GM12878 (cell line): ENCODE measurements at regions of chr4 and their contacts with region 1.

Region 1: GRCh38 chr4:1899149-1900086 is 28.2 kb downstream of the NSD2 start:
- DNase-seq: peak; percentile 53
- ATAC-seq: peak; percentile 98
- H3K4me3 ChIP-seq: no peak overlapping the region
- H3K27ac ChIP-seq: no peak overlapping the region; the same call in 1 of the 2 replicates
- H3K4me1 ChIP-seq: peaks cover 6% of the 10 kb centered on the region
- H3K27me3 ChIP-seq: no peaks in the 10 kb centered on the region
- CTCF ChIP-seq: peak; percentile 62 to 93 (median 91)
- EP300 ChIP-seq: no peak
- POLR2A ChIP-seq: no peak
- RAD21 ChIP-seq: peak; percentile 89

Region 2: GRCh38 chr4:1547856-1548826 is 351.3 kb before region 1 on chr4:
- CTCF ChIA-PET with region 1: no interaction called
- POLR2A ChIA-PET with region 1: no interaction called
- RAD21 ChIA-PET with region 1: no interaction called
- SMC1A ChIA-PET with region 1: no interaction called
- in situ Hi-C with region 1: no loop called
- intact Hi-C with region 1: no loop called
- DNase-seq: no peak
- ATAC-seq: no peak; the same call in 2 of the 3 replicates
- H3K4me3 ChIP-seq: no peak overlapping the region
- H3K27ac ChIP-seq: no peak overlapping the region
- H3K4me1 ChIP-seq: no peaks in the 10 kb centered on the region
- H3K27me3 ChIP-seq: no peaks in the 10 kb centered on the region
- CTCF ChIP-seq: no peak
- EP300 ChIP-seq: no peak
- POLR2A ChIP-seq: no peak
- RAD21 ChIP-seq: no peak

Region 3: GRCh38 chr4:1746265-1746691 is 153.1 kb before region 1 on chr4:
- CTCF ChIA-PET with region 1: interaction called, 38 read pairs
- POLR2A ChIA-PET with region 1: no interaction called
- RAD21 ChIA-PET with region 1: interaction called, 12 read pairs
- SMC1A ChIA-PET with region 1: interaction called, 9 read pairs
- in situ Hi-C with region 1: no loop called
- intact Hi-C with region 1: loop called (anchors 1 kb)
- DNase-seq: no peak
- ATAC-seq: peak; percentile 93
- H3K4me3 ChIP-seq: no peak overlapping the region
- H3K27ac ChIP-seq: no peak overlapping the region
- H3K4me1 ChIP-seq: no peaks in the 10 kb centered on the region
- H3K27me3 ChIP-seq: no peaks in the 10 kb centered on the region
- CTCF ChIP-seq: peak; percentile 65 to 93 (median 78)
- EP300 ChIP-seq: no peak
- POLR2A ChIP-seq: no peak
- RAD21 ChIP-seq: peak; percentile 69

Region 4: GRCh38 chr4:1809754-1810511 is 89.5 kb before region 1 on chr4:
- CTCF ChIA-PET with region 1: interaction called, 35 read pairs
- POLR2A ChIA-PET with region 1: no interaction called
- RAD21 ChIA-PET with region 1: interaction called, 5 read pairs
- SMC1A ChIA-PET with region 1: interaction called, 5 read pairs
- in situ Hi-C with region 1: no loop called
- intact Hi-C with region 1: no loop called
- DNase-seq: no peak
- ATAC-seq: peak; percentile 97
- H3K4me3 ChIP-seq: no peak overlapping the region
- H3K27ac ChIP-seq: no peak overlapping the region
- H3K4me1 ChIP-seq: no peaks in the 10 kb centered on the region; the same call in 1 of the 2 replicates
- H3K27me3 ChIP-seq: no peaks in the 10 kb centered on the region
- CTCF ChIP-seq: peak; percentile 86 to 93 (median 89)
- EP300 ChIP-seq: no peak
- POLR2A ChIP-seq: peak; percentile 10; the same call in 1 of the 2 replicates
- RAD21 ChIP-seq: peak; percentile 81

Region 5: GRCh38 chr4:1846580-1846979 is 52.8 kb before region 1 on chr4:
- CTCF ChIA-PET with region 1: interaction called, 13 read pairs
- POLR2A ChIA-PET with region 1: no interaction called
- RAD21 ChIA-PET with region 1: interaction called, 3 read pairs
- SMC1A ChIA-PET with region 1: interaction called, 3 read pairs
- in situ Hi-C with region 1: no loop called
- intact Hi-C with region 1: loop called (anchors 5 kb)
- DNase-seq: no peak
- ATAC-seq: peak; percentile 30; the same call in 1 of the 3 replicates
- H3K4me3 ChIP-seq: no peak overlapping the region
- H3K27ac ChIP-seq: peak overlapping the region; percentile 28; the same call in 1 of the 2 replicates
- H3K4me1 ChIP-seq: peaks cover 16% of the 10 kb centered on the region
- H3K27me3 ChIP-seq: no peaks in the 10 kb centered on the region
- CTCF ChIP-seq: no peak
- EP300 ChIP-seq: no peak
- POLR2A ChIP-seq: no peak
- RAD21 ChIP-seq: no peak

Region 6: DNA sequence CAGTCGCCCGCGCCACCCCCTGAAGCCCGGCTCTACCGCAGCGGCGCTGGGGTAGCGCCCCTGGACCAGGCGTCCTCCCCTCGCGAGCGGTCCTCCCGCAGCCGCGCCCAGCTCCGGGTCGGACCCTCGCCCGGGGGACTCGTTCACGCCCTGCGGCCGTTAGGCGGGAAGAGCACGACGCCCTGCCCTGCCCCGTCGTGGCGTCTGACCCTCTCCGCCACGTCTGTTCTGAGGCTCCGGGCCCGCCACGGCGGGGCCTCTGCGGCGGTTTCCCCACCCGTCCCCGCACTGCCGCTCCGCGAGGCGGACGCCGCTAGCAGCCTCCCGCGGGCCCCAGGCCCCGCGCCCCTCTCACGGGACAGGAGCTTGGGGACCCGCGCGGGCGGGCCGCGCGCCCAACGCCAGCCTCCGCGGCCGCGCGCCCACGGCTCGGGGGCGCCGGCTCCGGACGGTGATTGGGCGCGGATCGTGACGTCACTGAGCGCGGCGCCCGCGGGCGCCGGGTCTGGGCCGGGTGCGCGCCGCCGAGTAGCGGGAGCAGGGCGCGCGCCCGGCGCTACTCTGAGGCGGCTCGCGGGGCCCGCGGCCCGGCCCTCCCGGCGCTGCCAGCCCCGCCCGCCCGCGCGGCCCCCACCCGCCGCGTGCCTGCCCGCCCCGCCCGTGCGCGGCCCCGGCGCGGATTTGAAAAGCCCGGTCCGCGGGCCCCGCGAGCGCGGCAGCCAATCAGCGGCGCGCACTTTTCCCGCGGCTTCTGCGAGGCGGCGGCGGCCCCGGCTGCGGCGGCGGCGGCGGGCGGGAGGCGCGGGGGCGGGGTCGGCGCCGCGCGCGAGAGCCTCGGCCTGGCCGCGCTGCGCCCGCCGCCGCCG is 28.6 kb before region 1 on chr4 and contains the start of gene NSD2:
- CTCF ChIA-PET with region 1: interaction called, 17 read pairs
- POLR2A ChIA-PET with region 1: interaction called, 3 read pairs
- RAD21 ChIA-PET with region 1: interaction called, 3 read pairs
- SMC1A ChIA-PET with region 1: interaction called, 20 read pairs
- in situ Hi-C with region 1: no loop called
- intact Hi-C with region 1: loop called (anchors 2 kb)
- DNase-seq: no peak
- ATAC-seq: peak; percentile 60
- H3K4me3 ChIP-seq: peak within 1 kb of the TSS; percentile 83
- H3K27ac ChIP-seq: peak within 1 kb of the TSS; percentile 97
- H3K4me1 ChIP-seq: peaks cover 23% of the 10 kb centered on the region
- H3K27me3 ChIP-seq: no peaks in the 10 kb centered on the region
- CTCF ChIP-seq: no peak
- EP300 ChIP-seq: 0 out of 4 replicates have a peak, but pooled peaks of 1 of the 2 experiments have one; percentile 8
- POLR2A ChIP-seq: peak; percentile 95
- RAD21 ChIP-seq: no peak
- polyA plus RNA-seq, gene NSD2: 8.6 to 9.3 TPM

Region 7: GRCh38 chr4:1910643-1911042 is 11.2 kb after region 1 on chr4:
- CTCF ChIA-PET with region 1: interaction called, 38 read pairs
- POLR2A ChIA-PET with region 1: interaction called, 3 read pairs
- RAD21 ChIA-PET with region 1: no interaction called
- SMC1A ChIA-PET with region 1: interaction called, 7 read pairs
- in situ Hi-C with region 1: no loop called
- intact Hi-C with region 1: no loop called
- DNase-seq: no peak
- ATAC-seq: peak; percentile 53; the same call in 2 of the 3 replicates
- H3K4me3 ChIP-seq: no peak overlapping the region
- H3K27ac ChIP-seq: no peak overlapping the region
- H3K4me1 ChIP-seq: no peaks in the 10 kb centered on the region
- H3K27me3 ChIP-seq: no peaks in the 10 kb centered on the region
- CTCF ChIP-seq: peak; percentile 44 to 54 (median 53); a peak in 5 of 6 replicates
- EP300 ChIP-seq: no peak
- POLR2A ChIP-seq: no peak
- RAD21 ChIP-seq: peak; percentile 64